MCF 10A (cell line): ENCODE measurements at regions of chr19 and their contacts with region 1.

Region 1: DNA sequence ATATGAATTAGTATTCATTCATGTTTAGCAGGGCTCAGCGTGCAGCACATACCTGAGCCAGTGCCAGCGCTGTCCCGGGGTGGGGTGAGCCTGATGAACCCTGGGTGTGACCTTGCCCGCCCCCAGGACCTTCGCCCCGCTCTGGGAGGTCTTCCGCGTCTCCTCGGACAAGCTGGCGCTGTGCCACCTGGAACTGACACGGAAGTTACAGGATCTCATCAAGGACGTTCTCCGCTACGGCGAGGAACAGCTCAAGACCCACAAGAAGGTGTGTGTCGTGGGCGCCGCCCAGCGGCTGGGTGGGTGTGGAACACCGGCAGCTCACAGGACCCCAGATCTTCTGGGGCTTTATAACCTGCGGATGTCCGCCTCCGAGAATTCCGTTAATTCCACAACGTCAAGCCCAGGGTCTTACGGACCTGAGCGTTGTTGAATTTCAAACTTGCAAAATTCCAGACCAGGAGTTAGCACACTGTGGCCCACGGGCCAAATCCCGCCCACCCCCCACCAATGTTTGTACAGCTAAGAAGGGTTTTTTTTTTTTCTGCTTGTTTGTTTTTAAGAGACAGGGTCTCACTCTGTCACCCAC is 15.4 kb downstream of the FCHO1 start:
- DNase-seq: peak; percentile 95
- H3K4me3 Mint-ChIP-seq: peak overlapping the region; percentile 70
- H3K27ac Mint-ChIP-seq: peak overlapping the region; percentile 50
- H3K4me1 Mint-ChIP-seq: peaks cover 14% of the 10 kb centered on the region
- H3K27me3 Mint-ChIP-seq: no peaks in the 10 kb centered on the region
- CTCF ChIP-seq: peak; percentile 92

Region 2: DNA sequence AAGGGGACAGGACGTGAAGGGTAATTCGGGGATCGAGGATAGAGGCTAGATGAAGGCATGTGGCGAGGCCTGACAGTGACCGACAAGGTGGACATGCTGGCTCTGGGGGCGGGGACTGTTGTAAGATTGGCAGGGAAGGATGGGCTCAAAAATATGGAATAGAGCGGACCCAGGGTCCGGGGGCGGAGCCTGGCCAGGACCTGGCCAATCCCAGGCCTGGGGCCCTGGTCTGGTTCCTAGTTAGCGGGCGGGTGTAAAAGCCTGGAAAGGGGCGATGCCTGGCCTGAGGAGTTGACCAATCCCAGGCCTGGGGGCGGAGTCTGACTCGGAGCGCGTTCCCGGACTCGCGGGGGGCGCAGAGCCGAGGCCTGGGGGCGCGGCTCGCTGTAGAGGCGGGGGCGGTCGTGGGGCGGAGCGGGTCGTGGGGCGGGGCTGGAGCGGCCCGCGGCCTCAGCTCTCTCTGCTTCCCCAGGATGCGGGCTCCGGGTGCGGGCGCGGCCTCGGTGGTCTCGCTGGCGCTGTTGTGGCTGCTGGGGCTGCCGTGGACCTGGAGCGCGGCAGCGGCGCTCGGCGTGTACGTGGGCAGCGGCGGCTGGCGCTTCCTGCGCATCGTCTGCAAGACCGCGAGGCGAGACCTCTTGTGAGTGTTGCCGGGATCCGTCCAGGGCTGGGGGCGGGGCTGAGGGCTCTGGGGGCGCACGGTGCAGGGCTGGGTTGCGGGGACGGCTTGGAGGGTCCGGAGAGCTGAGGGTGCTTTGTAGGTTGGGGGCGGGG is 296.4 kb before region 1 on chr19 and contains the start of gene SLC27A1:
- CTCF ChIA-PET with region 1: interaction called, 4 read pairs
- POLR2A ChIA-PET with region 1: no interaction called
- intact Hi-C with region 1: loop called (anchors 5 kb)
- DNase-seq: peak; percentile 99
- H3K4me3 Mint-ChIP-seq: peak within 1 kb of the TSS; percentile 91
- H3K27ac Mint-ChIP-seq: peak within 1 kb of the TSS; percentile 97
- H3K4me1 Mint-ChIP-seq: peaks cover 41% of the 10 kb centered on the region
- H3K27me3 Mint-ChIP-seq: no peaks in the 10 kb centered on the region
- CTCF ChIP-seq: no peak
- total RNA-seq, gene SLC27A1: 3.4 and 5.0 TPM in 2 replicates

Region 3: DNA sequence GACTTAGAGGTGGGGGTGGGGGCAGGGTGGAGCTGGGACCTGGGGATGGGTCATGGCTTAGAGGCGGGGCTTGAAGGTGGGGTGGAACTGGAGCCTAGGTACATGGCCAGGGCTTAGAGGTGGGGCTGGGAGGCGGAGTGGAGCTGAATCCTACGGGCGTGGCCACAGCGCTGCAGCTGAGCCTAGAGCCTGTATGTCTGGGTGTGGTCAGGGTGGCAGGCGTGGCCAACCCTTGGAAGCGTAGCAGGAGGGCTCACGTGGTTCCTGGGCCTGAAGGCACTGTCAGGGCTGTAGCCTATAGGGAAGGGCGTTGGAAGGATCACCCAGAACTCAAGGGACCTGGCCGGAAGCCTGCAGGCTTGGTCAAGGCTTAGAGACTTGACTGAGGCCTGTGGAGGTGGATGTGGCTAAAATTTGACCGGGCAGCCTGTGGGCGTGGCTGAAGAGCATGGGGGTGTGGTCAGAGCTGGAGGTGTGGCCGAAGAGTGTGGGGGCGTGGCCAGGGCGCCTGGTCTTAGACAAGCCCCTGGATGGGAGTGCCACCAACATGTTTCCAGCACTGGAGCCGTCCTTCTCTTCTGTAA is 186.9 kb before region 1 on chr19:
- CTCF ChIA-PET with region 1: interaction called, 4 read pairs
- POLR2A ChIA-PET with region 1: no interaction called
- intact Hi-C with region 1: loop called (anchors 10 kb)
- DNase-seq: peak; percentile 94
- H3K4me3 Mint-ChIP-seq: no peak overlapping the region
- H3K27ac Mint-ChIP-seq: no peak overlapping the region
- H3K4me1 Mint-ChIP-seq: peaks cover 11% of the 10 kb centered on the region
- H3K27me3 Mint-ChIP-seq: no peaks in the 10 kb centered on the region
- CTCF ChIP-seq: no peak

Region 4: GRCh38 chr19:17718947-17719711 is 47.5 kb before region 1 on chr19 and contains the start of gene MAP1S:
- CTCF ChIA-PET with region 1: interaction called, 5 read pairs
- POLR2A ChIA-PET with region 1: interaction called, 3 read pairs
- intact Hi-C with region 1: loop called (anchors 5 kb)
- DNase-seq: peak; percentile 48
- H3K4me3 Mint-ChIP-seq: peak within 1 kb of the TSS; percentile 78
- H3K27ac Mint-ChIP-seq: peak within 1 kb of the TSS; percentile 62
- H3K4me1 Mint-ChIP-seq: peaks cover 21% of the 10 kb centered on the region
- H3K27me3 Mint-ChIP-seq: no peaks in the 10 kb centered on the region
- CTCF ChIP-seq: no peak
- total RNA-seq, gene MAP1S: 47.1 and 58.3 TPM in 2 replicates

Region 5: GRCh38 chr19:17755977-17756670 is 10.5 kb before region 1 on chr19:
- CTCF ChIA-PET with region 1: interaction called, 25 read pairs
- POLR2A ChIA-PET with region 1: no interaction called
- intact Hi-C with region 1: no loop called
- DNase-seq: no peak
- H3K4me3 Mint-ChIP-seq: no peak overlapping the region
- H3K27ac Mint-ChIP-seq: no peak overlapping the region
- H3K4me1 Mint-ChIP-seq: peaks cover 15% of the 10 kb centered on the region
- H3K27me3 Mint-ChIP-seq: no peaks in the 10 kb centered on the region
- CTCF ChIP-seq: no peak